ENCODE measurements at regions of chr5 and their contacts with region 1.

Region 1: GRCh38 chr5:32585446-32586275 is at the start of gene SUB1:
- DNase-seq: peak; percentile 94
- ATAC-seq: peak; percentile 64
- H3K4me3 ChIP-seq: peak within 1 kb of the TSS; percentile 83 to 93 (median 86)
- H3K4me3 Mint-ChIP-seq: peak within 1 kb of the TSS; percentile 96
- H3K27ac ChIP-seq: peak within 1 kb of the TSS; percentile 96 to 99
- H3K27ac Mint-ChIP-seq: peak within 1 kb of the TSS; percentile 97
- H3K4me1 ChIP-seq: peaks cover 68 to 76% of the 10 kb centered on the region in 2 donors
- H3K4me1 Mint-ChIP-seq: peaks cover 73% of the 10 kb centered on the region
- H3K27me3 ChIP-seq: no peaks in the 10 kb centered on the region
- H3K27me3 Mint-ChIP-seq: no peaks in the 10 kb centered on the region
- CTCF ChIP-seq: no peak
- total RNA-seq, gene SUB1: 117 and 123 TPM in 2 replicates

Region 2: DNA sequence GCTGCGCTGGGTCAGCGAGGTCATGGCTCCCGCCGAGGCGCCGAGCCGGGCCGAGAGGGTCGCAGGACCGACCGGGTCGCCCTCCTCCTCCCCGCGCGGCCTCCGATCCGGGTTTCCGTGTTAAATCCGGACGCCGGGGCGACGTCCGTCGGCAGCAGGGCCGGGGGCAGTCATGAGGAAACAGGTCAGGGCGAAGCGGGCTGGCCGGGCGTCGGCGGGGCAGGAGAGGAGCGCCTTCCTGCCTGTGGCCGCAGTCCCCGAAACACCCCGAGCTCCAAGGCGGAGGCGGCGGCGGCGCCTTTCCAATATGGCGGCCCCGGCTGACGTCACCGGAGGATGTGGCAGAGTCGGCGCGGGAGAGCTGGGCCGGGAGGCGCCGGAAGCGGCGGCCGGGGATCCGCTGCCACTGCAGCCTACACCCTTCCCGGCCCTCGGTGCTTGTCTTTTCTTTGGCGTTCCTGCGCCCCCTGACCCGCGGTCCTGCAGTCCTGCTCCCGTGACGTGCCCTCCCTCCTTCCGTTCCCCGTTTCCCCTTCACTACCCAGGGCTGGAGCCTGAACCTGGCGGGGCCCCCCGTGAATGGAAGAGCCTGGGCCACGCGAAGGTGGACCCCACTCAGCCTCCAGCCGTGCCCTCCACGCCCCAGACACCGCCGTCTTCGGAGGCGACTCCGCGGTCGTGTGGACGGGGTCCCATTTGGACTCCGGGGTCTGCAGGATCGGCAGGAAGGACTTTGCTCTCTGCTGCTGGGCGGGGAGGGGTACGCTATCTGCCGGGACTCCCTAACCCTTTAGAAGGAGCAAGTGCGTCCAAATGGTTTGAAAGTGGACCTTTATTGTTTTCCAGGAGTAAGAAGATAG is 411.4 kb before region 1 on chr5 and contains the start of gene GOLPH3:
- CTCF ChIA-PET with region 1: interaction called, 3 read pairs
- POLR2A ChIA-PET with region 1: no interaction called
- intact Hi-C with region 1: loop called (anchors 2 kb)
- DNase-seq: peak; percentile 91
- ATAC-seq: peak; percentile 85
- H3K4me3 ChIP-seq: peak within 1 kb of the TSS; percentile 65 to 92 (median 80)
- H3K4me3 Mint-ChIP-seq: peak within 1 kb of the TSS; percentile 96
- H3K27ac ChIP-seq: peak within 1 kb of the TSS; percentile 95 to 97
- H3K27ac Mint-ChIP-seq: peak within 1 kb of the TSS; percentile 96
- H3K4me1 ChIP-seq: peaks cover 13 to 19% of the 10 kb centered on the region in 2 donors
- H3K4me1 Mint-ChIP-seq: peaks cover 36% of the 10 kb centered on the region
- H3K27me3 ChIP-seq: no peaks in the 10 kb centered on the region
- H3K27me3 Mint-ChIP-seq: no peaks in the 10 kb centered on the region
- CTCF ChIP-seq: no peak
- total RNA-seq, gene GOLPH3: 58.8 and 62.6 TPM in 2 replicates

Region 3: GRCh38 chr5:32413466-32414263 is 172.0 kb before region 1 on chr5:
- CTCF ChIA-PET with region 1: interaction called, 10 read pairs
- POLR2A ChIA-PET with region 1: no interaction called
- intact Hi-C with region 1: no loop called
- DNase-seq: no peak
- ATAC-seq: no peak
- H3K4me3 ChIP-seq: no peak overlapping the region
- H3K4me3 Mint-ChIP-seq: no peak overlapping the region
- H3K27ac ChIP-seq: peak overlapping the region in 1 of 2 donors; percentile 49
- H3K27ac Mint-ChIP-seq: no peak overlapping the region
- H3K4me1 ChIP-seq: no peaks in the 10 kb centered on the region
- H3K4me1 Mint-ChIP-seq: peaks cover 9% of the 10 kb centered on the region
- H3K27me3 ChIP-seq: no peaks in the 10 kb centered on the region
- H3K27me3 Mint-ChIP-seq: no peaks in the 10 kb centered on the region
- CTCF ChIP-seq: no peak

Region 4: GRCh38 chr5:32482193-32482592 is 103.5 kb before region 1 on chr5:
- CTCF ChIA-PET with region 1: interaction called, 469 read pairs
- POLR2A ChIA-PET with region 1: interaction called, 5 read pairs
- intact Hi-C with region 1: no loop called
- DNase-seq: no peak
- ATAC-seq: no peak
- H3K4me3 ChIP-seq: no peak overlapping the region
- H3K4me3 Mint-ChIP-seq: no peak overlapping the region
- H3K27ac ChIP-seq: no peak overlapping the region
- H3K27ac Mint-ChIP-seq: no peak overlapping the region
- H3K4me1 ChIP-seq: no peaks in the 10 kb centered on the region
- H3K4me1 Mint-ChIP-seq: no peaks in the 10 kb centered on the region
- H3K27me3 ChIP-seq: no peaks in the 10 kb centered on the region
- H3K27me3 Mint-ChIP-seq: no peaks in the 10 kb centered on the region
- CTCF ChIP-seq: no peak

Region 5: DNA sequence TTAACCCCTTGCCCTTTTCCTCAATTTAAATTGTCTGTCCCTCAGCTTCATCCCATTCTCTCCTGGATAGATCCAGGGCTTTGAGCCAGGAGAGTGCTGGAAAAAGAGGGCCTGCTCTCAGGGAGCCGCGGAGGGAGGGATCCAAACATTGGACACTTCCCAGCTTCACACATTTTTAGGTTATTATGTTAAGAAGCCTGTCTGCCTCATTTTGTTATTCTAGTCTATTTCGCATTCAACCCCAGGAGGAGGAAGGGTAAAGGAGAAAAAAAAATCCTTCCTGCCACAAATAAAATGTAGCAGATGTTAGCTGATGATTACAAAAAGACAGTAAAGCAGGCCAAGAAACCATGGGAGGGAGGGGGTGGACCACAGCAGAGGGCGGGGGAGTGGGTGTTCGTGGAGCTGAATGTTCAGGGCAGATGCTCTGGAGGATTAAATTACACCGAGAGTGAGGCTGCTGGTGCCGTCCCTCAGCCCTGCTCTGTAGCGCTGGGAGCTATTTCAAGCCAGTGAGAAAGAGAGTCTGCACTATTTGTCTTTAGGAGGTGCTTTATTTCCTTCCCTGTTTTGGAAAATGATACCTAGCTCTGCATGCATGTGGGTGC is 80.6 kb before region 1 on chr5:
- CTCF ChIA-PET with region 1: interaction called, 14 read pairs
- POLR2A ChIA-PET with region 1: no interaction called
- intact Hi-C with region 1: no loop called
- DNase-seq: no peak
- ATAC-seq: no peak
- H3K4me3 ChIP-seq: no peak overlapping the region
- H3K4me3 Mint-ChIP-seq: no peak overlapping the region
- H3K27ac ChIP-seq: no peak overlapping the region
- H3K27ac Mint-ChIP-seq: no peak overlapping the region
- H3K4me1 ChIP-seq: peaks cover 11 to 14% of the 10 kb centered on the region in 2 donors
- H3K4me1 Mint-ChIP-seq: peaks cover 17% of the 10 kb centered on the region
- H3K27me3 ChIP-seq: peaks cover 0 to 29% (median 12%) of the 10 kb centered on the region in 4 experiments
- H3K27me3 Mint-ChIP-seq: peaks cover 49% of the 10 kb centered on the region
- CTCF ChIP-seq: no peak

Region 6: GRCh38 chr5:32542216-32543059 is 43.2 kb before region 1 on chr5:
- CTCF ChIA-PET with region 1: interaction called, 12 read pairs
- POLR2A ChIA-PET with region 1: interaction called, 3 read pairs
- intact Hi-C with region 1: loop called (anchors 2 kb)
- DNase-seq: no peak
- ATAC-seq: no peak
- H3K4me3 ChIP-seq: no peak overlapping the region
- H3K4me3 Mint-ChIP-seq: no peak overlapping the region
- H3K27ac ChIP-seq: no peak overlapping the region
- H3K27ac Mint-ChIP-seq: no peak overlapping the region
- H3K4me1 ChIP-seq: peaks cover 27 to 41% of the 10 kb centered on the region in 2 donors
- H3K4me1 Mint-ChIP-seq: peaks cover 37% of the 10 kb centered on the region
- H3K27me3 ChIP-seq: no peaks in the 10 kb centered on the region
- H3K27me3 Mint-ChIP-seq: no peaks in the 10 kb centered on the region
- CTCF ChIP-seq: no peak